Panc1 (cell line): ENCODE measurements at regions of chr1 and their contacts with region 1.

Region 1: DNA sequence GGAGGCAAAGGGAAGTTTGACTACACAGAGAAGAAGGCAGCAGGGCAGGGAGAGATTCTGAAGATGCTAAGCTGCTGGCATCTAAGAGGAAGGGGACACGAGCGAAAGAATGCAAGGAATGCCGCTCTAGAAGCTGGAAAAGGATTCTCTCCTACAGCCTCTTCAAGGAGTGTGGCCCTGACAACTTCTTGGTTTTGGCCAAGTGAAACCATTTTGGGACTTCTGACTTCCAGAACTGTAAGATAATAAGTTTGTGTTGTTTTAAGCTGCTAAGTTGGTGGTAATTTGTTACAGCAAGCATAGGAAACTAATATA is 28.5 kb downstream of the MGST3 start:
- DNase-seq: no peak
- ATAC-seq: no peak
- H3K4me3 ChIP-seq: no peak overlapping the region
- H3K27ac ChIP-seq: no peak overlapping the region
- H3K4me1 ChIP-seq: no peaks in the 10 kb centered on the region
- H3K27me3 ChIP-seq: no peaks in the 10 kb centered on the region
- CTCF ChIP-seq: no peak

Region 2: DNA sequence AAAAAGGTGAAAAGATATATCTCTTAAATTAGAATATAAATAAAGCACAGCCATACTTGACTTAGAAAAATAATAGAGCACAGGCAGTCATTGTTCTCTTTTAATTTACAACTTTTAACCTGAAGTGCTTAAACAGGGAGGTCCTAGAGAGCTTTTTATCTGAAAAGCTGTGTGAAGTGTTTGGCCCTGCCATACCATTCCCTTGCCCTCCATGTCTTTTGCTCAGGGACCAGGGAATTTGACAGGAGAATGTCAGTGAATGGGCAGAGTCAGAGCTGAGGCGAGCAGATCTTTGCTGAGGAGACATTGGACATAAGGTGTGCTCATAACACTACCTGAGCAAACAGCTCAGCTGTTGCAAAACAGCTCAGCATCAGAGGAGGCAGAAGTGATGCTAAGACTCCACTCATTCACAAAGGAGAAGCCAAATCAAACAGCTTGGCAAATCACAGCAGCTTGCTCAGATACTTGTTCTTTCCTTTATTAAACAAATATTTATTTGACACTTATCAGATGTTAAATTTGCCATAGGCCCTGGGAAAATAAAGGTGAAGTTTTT is 43.4 kb before region 1 on chr1:
- CTCF ChIA-PET with region 1: no interaction called
- POLR2A ChIA-PET with region 1: no interaction called
- in situ Hi-C with region 1: no loop called
- intact Hi-C with region 1: loop called (anchors 1 kb)
- DNase-seq: no peak
- ATAC-seq: no peak
- H3K4me3 ChIP-seq: no peak overlapping the region
- H3K27ac ChIP-seq: no peak overlapping the region
- H3K4me1 ChIP-seq: no peaks in the 10 kb centered on the region
- H3K27me3 ChIP-seq: peaks cover 2% of the 10 kb centered on the region; the same call in 1 of the 2 replicates
- CTCF ChIP-seq: no peak